Activated CD8-positive, alpha-beta T cell treated with anti-CD3 and anti-CD28 coated beads, Interleukin-2, amount 10 ng/mL, durations not matched to agents 7 days and 5 days (primary cell): ENCODE measurements at regions of chr22 and their contacts with region 1.

Region 1: GRCh38 chr22:23281406-23282088 is 101.2 kb downstream of the BCR start:
- DNase-seq: peak; percentile 87
- ATAC-seq: peak; percentile 74
- H3K4me3 Mint-ChIP-seq: no peak overlapping the region
- H3K27ac Mint-ChIP-seq: peak overlapping the region; percentile 68
- H3K4me1 Mint-ChIP-seq: peaks cover 26% of the 10 kb centered on the region
- H3K27me3 Mint-ChIP-seq: no peaks in the 10 kb centered on the region

Region 2: GRCh38 chr22:23137905-23138561 is 143.5 kb before region 1 on chr22:
- CTCF ChIA-PET with region 1: interaction called, 10 read pairs
- POLR2A ChIA-PET with region 1: no interaction called
- DNase-seq: peak; percentile 75
- ATAC-seq: peak; percentile 38
- H3K4me3 Mint-ChIP-seq: peak overlapping the region; percentile 62
- H3K27ac Mint-ChIP-seq: peak overlapping the region; percentile 98
- H3K4me1 Mint-ChIP-seq: peaks cover 62% of the 10 kb centered on the region
- H3K27me3 Mint-ChIP-seq: no peaks in the 10 kb centered on the region

Region 3: DNA sequence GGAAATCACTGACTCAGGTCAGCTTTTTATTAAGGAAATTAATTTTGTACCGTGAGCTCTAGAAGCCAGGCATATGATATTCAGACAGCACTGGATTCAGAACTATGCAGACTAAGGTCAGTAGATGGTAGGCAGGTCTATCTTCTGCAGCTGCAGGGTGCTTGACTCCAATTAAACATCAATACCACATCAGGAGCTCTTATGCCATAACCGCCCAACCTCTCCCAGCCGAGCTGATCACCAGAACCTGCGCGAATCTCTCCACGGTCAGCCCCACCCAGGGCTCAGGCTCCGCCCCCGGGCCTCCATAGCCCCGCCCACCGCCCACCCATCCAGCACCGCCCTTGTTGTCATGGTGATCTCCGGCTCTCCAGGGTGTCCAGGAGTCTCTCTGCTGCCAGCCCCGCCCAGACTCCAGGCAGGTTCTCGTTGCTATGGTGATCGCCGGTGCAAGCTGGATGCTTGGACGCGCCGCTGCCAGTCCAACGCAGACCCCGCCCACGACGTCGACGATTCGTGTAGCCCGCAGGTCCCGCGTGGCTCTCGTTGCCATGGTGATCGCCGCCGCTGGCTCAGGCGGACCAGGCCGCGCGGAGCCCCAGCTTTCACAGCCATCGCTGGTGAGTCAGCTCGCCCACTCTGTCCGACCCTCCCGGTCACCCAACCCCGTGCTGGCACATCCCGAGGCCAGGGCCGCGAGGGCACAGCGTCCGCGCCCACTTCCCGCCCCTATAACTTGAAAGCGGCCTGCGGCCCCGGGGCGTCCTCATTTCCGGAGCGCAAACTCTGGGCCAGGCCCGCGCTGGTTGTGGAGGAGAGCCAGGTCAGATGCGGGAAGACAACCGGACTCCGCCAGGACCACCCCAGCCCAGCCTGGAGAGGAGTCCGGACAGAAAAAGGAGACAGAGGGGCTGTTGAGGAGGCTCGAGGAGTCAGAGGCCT is 136.3 kb before region 1 on chr22 and contains the start of gene RAB36:
- CTCF ChIA-PET with region 1: interaction called, 10 read pairs
- POLR2A ChIA-PET with region 1: no interaction called
- DNase-seq: peak; percentile 92
- ATAC-seq: peak; percentile 63
- H3K4me3 Mint-ChIP-seq: peak within 1 kb of the TSS; percentile 63
- H3K27ac Mint-ChIP-seq: peak within 1 kb of the TSS; percentile 49
- H3K4me1 Mint-ChIP-seq: peaks cover 45% of the 10 kb centered on the region
- H3K27me3 Mint-ChIP-seq: peaks cover 5% of the 10 kb centered on the region
- total RNA-seq, gene RAB36: 0.79 to 1.0 TPM

Region 4: DNA sequence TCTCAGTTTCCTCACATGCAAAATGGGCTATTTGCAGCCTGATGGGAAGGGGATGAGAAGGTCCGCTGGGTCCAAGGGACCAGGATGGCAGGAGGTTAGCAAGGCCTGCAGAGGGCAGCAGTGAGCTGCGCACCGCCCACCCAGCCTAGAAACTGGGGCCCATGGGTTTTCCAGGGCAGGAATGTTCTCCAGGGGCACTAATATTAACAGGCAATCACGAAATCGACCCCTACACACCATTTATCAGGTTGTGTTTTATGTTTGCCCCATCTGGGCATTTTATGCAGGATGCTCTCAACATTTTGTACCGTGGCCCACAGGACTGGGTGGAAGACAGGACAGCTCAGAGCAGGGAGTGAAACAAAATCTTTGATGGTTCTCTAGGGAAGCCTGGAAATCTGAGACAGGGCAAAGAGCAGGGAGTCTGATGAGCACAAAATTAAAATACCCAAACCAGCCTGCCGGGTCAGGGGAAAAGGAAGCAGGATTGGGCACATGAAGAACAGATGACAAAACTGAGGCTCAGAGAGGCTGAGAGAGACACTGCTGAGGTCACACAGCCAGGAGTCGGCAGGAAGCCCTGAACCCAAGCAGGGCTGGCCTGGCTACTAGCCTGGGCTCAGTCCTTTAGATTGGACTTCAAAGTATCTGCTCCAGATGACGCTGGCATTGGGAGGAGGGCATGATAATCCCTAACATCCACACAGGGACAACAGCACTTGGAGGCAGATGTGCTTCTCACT is 102.9 kb before region 1 on chr22:
- CTCF ChIA-PET with region 1: interaction called, 280 read pairs
- POLR2A ChIA-PET with region 1: interaction called, 4 read pairs
- DNase-seq: peak; percentile 69
- ATAC-seq: peak; percentile 17
- H3K4me3 Mint-ChIP-seq: peak overlapping the region; percentile 74
- H3K27ac Mint-ChIP-seq: no peak overlapping the region
- H3K4me1 Mint-ChIP-seq: peaks cover 61% of the 10 kb centered on the region
- H3K27me3 Mint-ChIP-seq: peaks cover 5% of the 10 kb centered on the region

Region 5: DNA sequence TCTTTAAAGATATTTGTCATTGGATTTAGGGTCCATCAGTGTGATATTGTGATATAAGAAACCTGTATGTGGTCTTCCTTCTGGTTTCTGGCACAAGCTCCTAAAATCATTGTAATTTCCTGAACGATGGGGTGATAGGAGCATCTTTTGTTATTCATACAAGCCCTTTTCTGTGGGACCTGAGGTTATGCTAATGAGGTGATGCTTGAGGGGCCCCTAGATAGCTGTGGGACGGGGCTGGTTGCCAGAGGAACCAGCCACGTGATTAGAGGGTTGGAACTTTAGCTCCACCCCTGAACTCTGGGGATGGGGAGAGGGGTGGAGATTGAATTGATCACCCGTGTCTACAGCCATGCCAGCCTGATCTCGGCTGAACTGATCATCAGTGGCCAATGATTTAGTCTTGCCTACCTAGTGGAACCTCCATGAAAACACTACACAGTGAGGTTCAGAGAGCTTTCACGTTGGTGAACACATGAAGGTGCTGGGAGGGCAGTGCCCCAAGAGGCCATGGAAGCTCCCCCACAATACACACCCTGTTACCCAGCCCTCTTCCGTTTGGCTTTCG is 38.5 kb before region 1 on chr22:
- CTCF ChIA-PET with region 1: interaction called, 15 read pairs
- POLR2A ChIA-PET with region 1: no interaction called
- DNase-seq: peak; percentile 82
- ATAC-seq: peak; percentile 91
- H3K4me3 Mint-ChIP-seq: peak overlapping the region; percentile 59
- H3K27ac Mint-ChIP-seq: peak overlapping the region; percentile 88
- H3K4me1 Mint-ChIP-seq: peaks cover 69% of the 10 kb centered on the region
- H3K27me3 Mint-ChIP-seq: no peaks in the 10 kb centered on the region